Activated CD4-positive, alpha-beta memory T cell treated with anti-CD3 and anti-CD28 coated beads for 36 hours (primary cell): ENCODE measurements at regions of chr9 and their contacts with region 1.

Region 1: GRCh38 chr9:88388172-88388885 is at the start of gene SPIN1:
- DNase-seq: peak; percentile 88
- H3K4me3 Mint-ChIP-seq: peak within 1 kb of the TSS; percentile 91
- H3K27ac Mint-ChIP-seq: peak within 1 kb of the TSS; percentile 97
- H3K4me1 Mint-ChIP-seq: peaks cover 28% of the 10 kb centered on the region
- H3K27me3 Mint-ChIP-seq: no peaks in the 10 kb centered on the region
- total RNA-seq, gene SPIN1: 19.6 to 20.8 TPM

Region 2: GRCh38 chr9:87973730-87974292 is 414.5 kb before region 1 on chr9:
- CTCF ChIA-PET with region 1: interaction called, 5 read pairs
- POLR2A ChIA-PET with region 1: no interaction called
- intact Hi-C with region 1: loop called (anchors 1 kb)
- DNase-seq: no peak
- H3K4me3 Mint-ChIP-seq: peak overlapping the region; percentile 91
- H3K27ac Mint-ChIP-seq: peak overlapping the region; percentile 18
- H3K4me1 Mint-ChIP-seq: peaks cover 14% of the 10 kb centered on the region
- H3K27me3 Mint-ChIP-seq: peaks cover 3% of the 10 kb centered on the region

Region 3: DNA sequence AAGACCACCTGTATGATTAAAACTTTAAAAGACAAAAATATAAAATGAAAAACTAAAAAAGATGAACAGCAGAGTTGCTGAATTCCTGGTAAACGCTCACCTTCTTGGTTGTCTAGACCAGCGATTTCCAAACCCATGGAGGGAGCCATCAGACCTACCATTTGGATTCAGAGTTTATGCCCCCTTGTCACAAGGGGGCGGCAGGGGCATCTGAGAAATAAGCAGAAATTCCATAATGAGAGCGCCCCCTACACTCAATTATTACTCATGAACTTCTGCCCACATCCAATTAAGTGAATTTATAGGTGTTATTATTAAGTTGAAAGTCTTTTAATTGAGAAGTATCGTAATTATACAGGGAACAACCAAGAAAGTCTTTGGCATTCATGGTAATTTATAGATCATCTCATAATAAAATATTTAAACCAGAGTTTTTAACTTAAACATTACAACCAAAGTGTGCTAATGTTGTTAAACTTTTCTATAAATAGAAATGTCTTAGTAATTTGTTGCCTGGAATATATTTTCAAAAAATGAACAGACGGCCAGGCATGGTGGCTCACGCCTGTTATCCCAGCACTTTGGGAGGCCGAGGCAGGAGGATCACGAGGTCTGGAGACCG is 214.8 kb before region 1 on chr9:
- CTCF ChIA-PET with region 1: interaction called, 3 read pairs
- POLR2A ChIA-PET with region 1: no interaction called
- intact Hi-C with region 1: loop called (anchors 2 kb)
- DNase-seq: peak; percentile 58
- H3K4me3 Mint-ChIP-seq: no peak overlapping the region
- H3K27ac Mint-ChIP-seq: no peak overlapping the region
- H3K4me1 Mint-ChIP-seq: peaks cover under 1% of the 10 kb centered on the region
- H3K27me3 Mint-ChIP-seq: peaks cover 11% of the 10 kb centered on the region

Region 4: GRCh38 chr9:88322906-88323566 is 65.3 kb before region 1 on chr9:
- CTCF ChIA-PET with region 1: no interaction called
- POLR2A ChIA-PET with region 1: no interaction called
- intact Hi-C with region 1: loop called (anchors 5 kb)
- DNase-seq: peak; percentile 68
- H3K4me3 Mint-ChIP-seq: no peak overlapping the region
- H3K27ac Mint-ChIP-seq: no peak overlapping the region
- H3K4me1 Mint-ChIP-seq: peaks cover 24% of the 10 kb centered on the region
- H3K27me3 Mint-ChIP-seq: peaks cover 4% of the 10 kb centered on the region

Region 5: GRCh38 chr9:88578121-88579054 is 190.1 kb after region 1 on chr9:
- CTCF ChIA-PET with region 1: no interaction called
- POLR2A ChIA-PET with region 1: no interaction called
- intact Hi-C with region 1: loop called (anchors 10 kb)
- DNase-seq: peak; percentile 76
- H3K4me3 Mint-ChIP-seq: peak overlapping the region; percentile 30
- H3K27ac Mint-ChIP-seq: no peak overlapping the region
- H3K4me1 Mint-ChIP-seq: peaks cover 3% of the 10 kb centered on the region
- H3K27me3 Mint-ChIP-seq: peaks cover 18% of the 10 kb centered on the region